ENCODE measurements at regions of chr10 and their contacts with region 1.

Region 1: GRCh38 chr10:72331601-72332422 is 22.9 kb downstream of the DNAJB12 start:
- DNase-seq: peak in 3 of 4 donors; percentile 88 to 96 (median 92)
- ATAC-seq: peak; percentile 83
- H3K4me3 ChIP-seq: peak overlapping the region in 1 of 2 donors; percentile 5
- H3K27ac ChIP-seq: peak overlapping the region; percentile 82 to 86
- H3K4me1 ChIP-seq: peaks cover 66 to 100% of the 10 kb centered on the region in 2 donors
- H3K27me3 ChIP-seq: no peaks in the 10 kb centered on the region
- CTCF ChIP-seq: peak in 1 of 2 donors; percentile 64

Region 2: DNA sequence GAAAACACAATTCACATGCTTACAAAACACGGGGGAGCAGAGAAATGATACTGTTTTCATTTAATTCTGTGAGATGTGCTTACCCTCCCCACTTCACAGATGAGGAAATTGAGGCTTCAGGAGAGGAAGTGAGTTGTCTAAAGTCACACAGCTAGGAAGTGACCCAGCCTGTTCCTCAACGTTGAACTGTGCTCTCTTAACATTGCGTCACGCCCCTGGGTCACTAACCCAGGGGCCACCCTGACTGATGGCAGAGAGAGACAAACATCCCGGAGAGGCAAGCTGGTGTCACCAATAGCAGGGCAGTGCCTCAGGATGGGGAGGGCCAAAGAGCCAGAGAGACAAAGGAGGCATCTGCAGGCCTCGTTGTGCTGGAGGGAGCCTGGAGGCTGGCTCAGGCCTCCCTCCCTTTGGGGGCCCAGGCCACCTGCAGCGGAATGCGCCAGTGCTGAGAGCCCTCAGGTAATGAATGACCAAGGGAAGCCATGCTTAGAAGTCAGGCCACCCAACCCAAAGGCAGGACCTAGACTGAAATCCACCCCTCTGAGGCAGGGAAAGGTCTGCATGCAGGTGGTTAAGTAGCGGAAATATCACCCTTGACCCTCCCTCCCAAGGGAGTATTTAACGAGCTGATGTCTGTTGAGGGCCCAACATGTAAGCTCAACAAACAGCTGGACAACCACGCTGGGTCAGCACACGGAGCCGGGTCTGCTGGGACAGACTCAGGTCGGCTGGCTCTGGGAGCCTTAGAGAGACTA is 693.6 kb before region 1 on chr10:
- intact Hi-C with region 1: no loop called
- DNase-seq: peak in 2 of 4 donors; percentile 84 to 89
- ATAC-seq: peak; percentile 76
- H3K4me3 ChIP-seq: peak overlapping the region in 1 of 2 donors; percentile 11
- H3K27ac ChIP-seq: peak overlapping the region in 1 of 2 donors; percentile 92
- H3K4me1 ChIP-seq: peaks cover 0 to 54% of the 10 kb centered on the region in 2 donors
- H3K27me3 ChIP-seq: no peaks in the 10 kb centered on the region
- CTCF ChIP-seq: no peak

Region 3: DNA sequence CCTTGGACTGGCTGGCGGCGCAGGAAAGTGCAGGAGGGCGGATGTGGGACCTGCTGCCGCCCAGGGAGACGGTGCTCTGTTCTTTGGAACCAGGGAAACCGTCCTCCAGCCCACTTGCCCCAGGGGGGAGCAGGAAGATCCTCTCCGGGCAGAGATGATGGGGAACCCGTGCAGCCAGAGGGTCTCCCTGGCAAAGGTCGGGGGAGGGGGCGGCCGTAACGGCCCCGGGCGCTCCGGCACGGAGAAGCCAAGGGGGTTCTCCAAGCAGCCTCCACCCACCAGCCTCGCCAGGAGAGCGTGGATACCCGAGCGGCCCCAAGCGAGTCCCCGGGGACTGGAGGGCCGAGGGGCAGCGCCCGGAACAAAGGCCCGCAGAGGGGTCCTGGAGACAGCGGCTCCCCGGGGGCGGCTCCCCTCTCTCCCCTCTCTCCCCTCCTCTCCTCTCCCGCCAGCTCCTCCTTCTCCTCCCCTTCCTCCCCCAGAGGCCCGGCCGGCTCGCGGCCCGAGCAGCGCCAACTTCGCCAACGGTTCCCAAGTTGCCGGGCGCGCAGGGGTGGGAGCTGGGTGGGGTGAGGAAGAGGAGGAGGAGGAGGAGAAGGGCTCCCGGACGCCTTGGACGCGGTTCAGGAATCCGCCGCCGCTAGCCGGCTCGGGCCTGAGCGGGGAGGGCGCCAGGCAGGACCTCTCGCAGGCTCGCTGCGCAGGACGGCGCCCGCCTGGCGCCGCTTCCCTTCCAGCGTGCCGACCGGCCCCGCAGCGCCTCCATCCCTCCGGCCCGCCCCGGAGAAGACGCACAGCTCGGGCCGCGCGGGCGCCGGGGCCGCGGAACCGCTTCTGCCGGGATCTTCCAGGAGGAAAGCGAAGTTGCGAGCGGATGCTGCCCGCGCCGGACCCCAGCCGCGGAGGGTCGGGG is 367.8 kb before region 1 on chr10 and contains the start of gene CHST3:
- intact Hi-C with region 1: loop called in 1 of 2 experiments (anchors 10 kb)
- DNase-seq: peak; percentile 61 to 82 (median 68)
- ATAC-seq: peak; percentile 79
- H3K4me3 ChIP-seq: peak within 1 kb of the TSS; percentile 47 to 59
- H3K27ac ChIP-seq: peak within 1 kb of the TSS; percentile 78 to 82
- H3K4me1 ChIP-seq: peaks cover 12 to 34% of the 10 kb centered on the region in 2 donors
- H3K27me3 ChIP-seq: peaks cover 0 to 42% of the 10 kb centered on the region in 2 donors
- CTCF ChIP-seq: no peak
- polyA plus RNA-seq, gene CHST3: 10.6 to 14.1 (median 11.6) TPM

Region 4: GRCh38 chr10:72048450-72049124 is 283.2 kb before region 1 on chr10:
- intact Hi-C with region 1: loop called in 1 of 2 experiments (anchors 10 kb)
- DNase-seq: peak; percentile 89 to 95 (median 93)
- ATAC-seq: peak; percentile 99
- H3K4me3 ChIP-seq: no peak overlapping the region
- H3K27ac ChIP-seq: no peak overlapping the region
- H3K4me1 ChIP-seq: peaks cover 0 to 3% of the 10 kb centered on the region in 2 donors
- H3K27me3 ChIP-seq: no peaks in the 10 kb centered on the region
- CTCF ChIP-seq: peak; percentile 97 to 99

Region 5: GRCh38 chr10:72107325-72108003 is 224.3 kb before region 1 on chr10:
- intact Hi-C with region 1: no loop called
- DNase-seq: no peak
- ATAC-seq: peak; percentile 90
- H3K4me3 ChIP-seq: no peak overlapping the region
- H3K27ac ChIP-seq: peak overlapping the region in 1 of 2 donors; percentile 49
- H3K4me1 ChIP-seq: no peaks in the 10 kb centered on the region
- H3K27me3 ChIP-seq: no peaks in the 10 kb centered on the region
- CTCF ChIP-seq: no peak

Region 6: DNA sequence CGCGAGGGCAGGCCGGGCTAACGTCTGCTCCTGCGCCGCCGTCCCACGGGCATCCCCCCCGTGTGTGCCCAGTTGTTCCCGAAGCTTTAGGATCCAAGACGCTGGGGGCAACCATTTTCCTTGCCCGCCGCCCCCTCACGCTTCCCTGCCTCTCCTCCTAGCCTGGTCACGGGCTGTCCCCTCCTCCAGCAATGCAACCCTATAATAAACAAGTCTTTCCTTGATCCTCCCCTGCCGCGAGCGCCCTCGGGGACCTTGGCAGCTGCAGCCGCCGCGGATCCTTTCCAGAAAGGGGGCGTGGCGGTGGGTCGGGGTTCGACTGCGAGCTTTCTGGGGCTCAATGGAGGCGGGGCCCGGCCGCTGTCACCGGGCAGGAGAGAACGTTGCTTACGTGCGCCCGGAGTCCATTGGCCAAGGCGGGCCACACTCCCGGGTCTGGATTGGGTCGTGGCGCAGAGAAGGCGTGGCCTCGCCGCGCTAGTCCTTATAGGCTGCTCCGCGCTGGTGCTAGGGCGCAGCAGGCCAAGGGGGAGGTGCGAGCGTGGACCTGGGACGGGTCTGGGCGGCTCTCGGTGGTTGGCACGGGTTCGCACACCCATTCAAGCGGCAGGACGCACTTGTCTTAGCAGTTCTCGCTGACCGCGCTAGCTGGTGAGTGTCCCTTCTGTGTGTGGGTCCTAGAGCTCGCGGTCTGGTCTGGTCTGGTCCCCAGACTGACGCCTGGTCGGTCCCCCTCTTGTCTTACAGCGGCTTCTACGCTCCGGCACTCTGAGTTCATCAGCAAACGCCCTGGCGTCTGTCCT is 58.2 kb before region 1 on chr10 and contains the start of gene DDIT4:
- intact Hi-C with region 1: loop called in 1 of 2 experiments (anchors 10 kb)
- DNase-seq: peak; percentile 99 to 100 (median 100)
- ATAC-seq: peak; percentile 89
- H3K4me3 ChIP-seq: peak within 1 kb of the TSS; percentile 83 to 96
- H3K27ac ChIP-seq: peak within 1 kb of the TSS; percentile 87 to 99
- H3K4me1 ChIP-seq: peaks cover 16 to 49% of the 10 kb centered on the region in 2 donors
- H3K27me3 ChIP-seq: no peaks in the 10 kb centered on the region
- CTCF ChIP-seq: no peak
- polyA plus RNA-seq, gene DDIT4: 49.7 to 98.7 (median 56.4) TPM

Measured in left lung (tissue), 14 donors.